Activated naive CD4-positive, alpha-beta T cell treated with anti-CD3 and anti-CD28 coated beads, Interleukin-2, amount 10 ng/mL, durations not matched to agents 7 days and 5 days (primary cell): ENCODE measurements at regions of chr17 and their contacts with region 1.

Region 1: GRCh38 chr17:74776044-74776977 is at the start of gene NAT9:
- DNase-seq: peak; percentile 99
- H3K4me3 Mint-ChIP-seq: peak within 1 kb of the TSS; percentile 98
- H3K27ac Mint-ChIP-seq: peak within 1 kb of the TSS; percentile 94
- H3K4me1 Mint-ChIP-seq: peaks cover 73% of the 10 kb centered on the region
- H3K27me3 Mint-ChIP-seq: peaks cover 4% of the 10 kb centered on the region

Region 2: DNA sequence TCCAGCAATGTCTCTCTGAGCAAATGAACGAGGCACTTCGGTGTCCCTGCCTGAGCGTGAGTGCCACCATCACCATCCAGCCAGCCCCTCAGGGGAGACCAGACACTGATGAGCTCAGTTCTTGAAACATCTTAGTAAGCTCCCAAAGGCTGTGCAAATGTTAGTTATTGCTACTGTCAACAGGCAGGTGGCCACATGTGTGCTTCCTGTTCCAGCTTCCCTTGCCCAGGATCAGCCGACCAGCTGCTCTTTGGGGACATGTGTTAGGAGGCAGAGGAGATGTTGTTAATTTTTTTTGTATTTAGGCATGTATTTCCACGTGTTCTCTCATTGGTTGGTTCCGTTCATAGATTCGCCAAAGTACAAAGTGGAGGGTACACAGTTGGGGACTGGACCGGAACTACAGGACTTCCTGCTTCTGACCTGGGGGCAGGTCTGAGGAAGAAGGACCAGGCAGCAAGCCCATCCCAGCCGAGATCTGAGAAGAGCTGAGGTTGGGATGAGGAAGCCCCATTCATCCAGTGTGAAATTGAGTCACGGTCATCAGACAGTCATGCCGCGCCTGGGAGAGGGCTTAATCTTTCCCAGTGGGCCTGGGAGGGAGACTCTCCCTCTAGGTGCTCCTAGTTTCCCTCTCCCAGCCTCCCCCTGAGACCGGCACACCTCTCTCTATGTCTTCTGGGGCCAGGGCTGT is 559.1 kb before region 1 on chr17:
- CTCF ChIA-PET with region 1: no interaction called
- DNase-seq: no peak
- H3K4me3 Mint-ChIP-seq: no peak overlapping the region
- H3K27ac Mint-ChIP-seq: no peak overlapping the region
- H3K4me1 Mint-ChIP-seq: peaks cover 43% of the 10 kb centered on the region
- H3K27me3 Mint-ChIP-seq: peaks cover 38% of the 10 kb centered on the region

Region 3: DNA sequence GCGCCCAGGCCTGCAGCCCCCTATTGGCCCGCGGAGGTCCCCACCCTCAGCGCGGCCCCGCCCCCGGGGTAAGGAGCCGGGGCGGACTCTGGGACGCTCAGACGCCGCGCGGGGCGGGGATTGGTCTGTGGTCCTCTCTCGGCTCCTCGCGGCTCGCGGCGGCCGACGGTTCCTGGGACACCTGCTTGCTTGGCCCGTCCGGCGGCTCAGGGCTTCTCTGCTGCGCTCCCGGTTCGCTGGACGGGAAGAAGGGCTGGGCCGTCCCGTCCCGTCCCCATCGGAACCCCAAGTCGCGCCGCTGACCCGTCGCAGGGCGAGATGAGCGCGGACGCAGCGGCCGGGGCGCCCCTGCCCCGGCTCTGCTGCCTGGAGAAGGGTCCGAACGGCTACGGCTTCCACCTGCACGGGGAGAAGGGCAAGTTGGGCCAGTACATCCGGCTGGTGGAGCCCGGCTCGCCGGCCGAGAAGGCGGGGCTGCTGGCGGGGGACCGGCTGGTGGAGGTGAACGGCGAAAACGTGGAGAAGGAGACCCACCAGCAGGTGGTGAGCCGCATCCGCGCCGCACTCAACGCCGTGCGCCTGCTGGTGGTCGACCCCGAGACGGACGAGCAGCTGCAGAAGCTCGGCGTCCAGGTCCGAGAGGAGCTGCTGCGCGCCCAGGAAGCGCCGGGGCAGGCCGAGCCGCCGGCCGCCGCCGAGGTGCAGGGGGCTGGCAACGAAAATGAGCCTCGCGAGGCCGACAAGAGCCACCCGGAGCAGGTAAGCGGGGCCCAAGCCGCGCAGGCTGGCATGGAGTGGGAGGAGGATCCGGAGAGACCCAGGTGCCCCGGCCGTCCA is 27.6 kb before region 1 on chr17 and contains the start of gene NHERF1:
- CTCF ChIA-PET with region 1: interaction called, 56 read pairs
- DNase-seq: peak; percentile 95
- H3K4me3 Mint-ChIP-seq: peak within 1 kb of the TSS; percentile 99
- H3K27ac Mint-ChIP-seq: peak within 1 kb of the TSS; percentile 88
- H3K4me1 Mint-ChIP-seq: peaks cover 64% of the 10 kb centered on the region
- H3K27me3 Mint-ChIP-seq: no peaks in the 10 kb centered on the region